ENCODE measurements at regions of chr5 and their contacts with region 1.

Region 1: GRCh38 chr5:172106511-172107356 is 81.3 kb downstream of the STK10 start:
- DNase-seq: peak in 2 of 3 donors; percentile 43 to 56
- H3K4me3 ChIP-seq: no peak overlapping the region
- H3K4me3 Mint-ChIP-seq: no peak overlapping the region
- H3K27ac ChIP-seq: peak overlapping the region in 1 of 2 donors; percentile 50
- H3K27ac Mint-ChIP-seq: peak overlapping the region; percentile 33 to 88 (median 80)
- H3K4me1 ChIP-seq: peaks cover 36 to 49% of the 10 kb centered on the region in 2 donors
- H3K4me1 Mint-ChIP-seq: peaks cover 43% of the 10 kb centered on the region
- H3K27me3 ChIP-seq: no peaks in the 10 kb centered on the region
- H3K27me3 Mint-ChIP-seq: no peaks in the 10 kb centered on the region
- CTCF ChIP-seq: peak; percentile 97

Region 2: DNA sequence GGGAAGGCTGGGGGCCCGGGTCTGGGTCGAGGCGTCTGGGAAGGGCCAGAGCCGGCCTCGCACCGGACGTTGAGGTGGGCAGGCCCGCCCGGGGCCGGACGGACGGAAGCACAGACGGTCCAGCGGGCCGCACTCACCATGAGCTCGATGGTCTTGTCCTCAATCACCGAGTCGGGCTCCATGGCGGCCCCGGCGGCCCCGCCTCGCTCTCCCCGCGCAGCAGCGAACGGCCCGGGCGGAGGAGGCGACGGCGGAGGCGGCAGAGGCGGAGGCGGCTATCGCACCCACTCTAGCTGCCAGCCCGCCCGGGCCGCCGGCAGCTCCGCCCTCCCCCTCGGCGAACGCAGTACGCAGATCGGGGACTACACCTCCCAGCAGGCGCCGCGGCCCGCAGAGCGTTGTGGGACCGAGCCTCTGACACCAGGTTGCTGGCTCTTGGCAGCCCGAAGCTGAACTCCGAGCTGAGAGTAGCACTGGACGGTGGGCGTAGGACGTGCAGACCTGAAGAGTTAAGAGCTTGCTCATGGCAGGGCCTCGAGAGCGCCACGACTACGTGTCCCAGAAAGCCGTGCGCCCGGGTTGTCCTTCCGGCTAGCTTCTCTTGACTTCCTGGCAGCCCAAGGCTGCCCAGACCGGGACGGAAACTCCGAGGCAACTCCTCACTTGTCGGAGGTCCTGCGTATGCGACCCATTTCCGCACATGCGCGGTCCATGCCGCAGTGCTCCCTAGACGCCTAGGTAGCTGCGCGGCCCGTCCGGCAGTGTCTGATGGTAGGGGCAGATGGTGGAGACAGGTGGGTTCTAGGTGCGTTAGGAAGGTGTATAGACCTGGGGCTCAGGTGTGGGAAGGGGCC is 100.2 kb before region 1 on chr5 and contains the start of gene FBXW11:
- intact Hi-C with region 1: loop called in 1 of 2 experiments (anchors 10 kb)
- DNase-seq: peak; percentile 93 to 98 (median 96)
- H3K4me3 ChIP-seq: peak within 1 kb of the TSS; percentile 61 to 100 (median 93)
- H3K4me3 Mint-ChIP-seq: peak within 1 kb of the TSS; percentile 98 to 99
- H3K27ac ChIP-seq: peak within 1 kb of the TSS; percentile 92 to 97
- H3K27ac Mint-ChIP-seq: peak within 1 kb of the TSS; percentile 96 to 100 (median 99)
- H3K4me1 ChIP-seq: peaks cover 42 to 51% of the 10 kb centered on the region in 2 donors
- H3K4me1 Mint-ChIP-seq: peaks cover 42% of the 10 kb centered on the region
- H3K27me3 ChIP-seq: no peaks in the 10 kb centered on the region
- H3K27me3 Mint-ChIP-seq: no peaks in the 10 kb centered on the region
- CTCF ChIP-seq: no peak
- polyA plus RNA-seq, gene FBXW11: 15.0 to 24.5 (median 18.2) TPM

Region 3: DNA sequence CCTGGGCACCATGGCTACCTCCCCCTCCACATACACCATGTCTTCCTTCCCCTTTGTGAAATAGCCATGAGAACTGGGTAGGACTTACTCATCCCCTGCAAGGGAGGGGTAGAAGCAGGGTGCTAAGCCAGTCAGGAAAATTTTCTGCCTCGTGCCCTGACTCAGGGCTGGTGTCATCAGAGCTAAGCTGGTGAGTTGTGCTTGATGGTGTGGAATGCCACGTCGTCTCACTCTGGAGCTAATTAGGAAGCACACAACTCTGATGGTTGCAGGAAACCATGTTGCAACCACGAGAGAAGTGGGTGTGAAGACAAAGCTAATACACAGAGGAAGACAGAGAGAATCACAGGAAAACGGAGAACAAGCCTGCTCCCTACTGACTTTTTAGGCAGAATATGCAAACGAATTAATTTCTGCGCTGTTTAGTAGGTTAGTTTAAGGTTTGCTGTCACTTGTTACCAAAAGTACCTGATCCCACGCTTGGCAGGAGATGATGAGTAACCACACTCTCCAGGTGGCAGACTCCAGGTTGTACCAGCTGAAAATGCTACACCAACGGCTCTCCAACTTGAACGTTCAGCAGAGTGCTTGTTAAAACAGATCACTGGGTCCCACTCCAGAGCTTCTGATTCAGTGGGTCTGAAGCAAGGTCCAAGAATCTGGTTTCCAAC is 26.8 kb after region 1 on chr5:
- intact Hi-C with region 1: loop called in 1 of 2 experiments (anchors 1 kb)
- DNase-seq: peak; percentile 99 to 100 (median 100)
- H3K4me3 ChIP-seq: peak overlapping the region in 1 of 3 experiments; percentile 32
- H3K4me3 Mint-ChIP-seq: peak overlapping the region; percentile 27 to 65
- H3K27ac ChIP-seq: peak overlapping the region; percentile 99
- H3K27ac Mint-ChIP-seq: peak overlapping the region; percentile 99 to 100 (median 100)
- H3K4me1 ChIP-seq: peaks cover 68 to 72% of the 10 kb centered on the region in 2 donors
- H3K4me1 Mint-ChIP-seq: peaks cover 75% of the 10 kb centered on the region
- H3K27me3 ChIP-seq: no peaks in the 10 kb centered on the region
- H3K27me3 Mint-ChIP-seq: peaks cover 0 to 2% (median 0%) of the 10 kb centered on the region in 3 donors
- CTCF ChIP-seq: no peak

Region 4: GRCh38 chr5:172144291-172144815 is 37.6 kb after region 1 on chr5:
- intact Hi-C with region 1: loop called (anchors 5 kb)
- DNase-seq: no peak
- H3K4me3 ChIP-seq: no peak overlapping the region
- H3K4me3 Mint-ChIP-seq: no peak overlapping the region
- H3K27ac ChIP-seq: peak overlapping the region; percentile 13 to 61
- H3K27ac Mint-ChIP-seq: peak overlapping the region in 6 of 7 donors; percentile 46 to 82 (median 74)
- H3K4me1 ChIP-seq: peaks cover 5 to 8% of the 10 kb centered on the region in 2 donors
- H3K4me1 Mint-ChIP-seq: peaks cover 35% of the 10 kb centered on the region
- H3K27me3 ChIP-seq: no peaks in the 10 kb centered on the region
- H3K27me3 Mint-ChIP-seq: peaks cover 0 to 4% (median 0%) of the 10 kb centered on the region in 3 donors
- CTCF ChIP-seq: no peak

Region 5: GRCh38 chr5:172188033-172188892 is 81.5 kb after region 1 on chr5 and contains the start of gene STK10:
- intact Hi-C with region 1: loop called (anchors 2 to 5 kb)
- DNase-seq: peak; percentile 82 to 91 (median 90)
- H3K4me3 ChIP-seq: peak within 1 kb of the TSS; percentile 84 to 97 (median 85)
- H3K4me3 Mint-ChIP-seq: peak within 1 kb of the TSS; percentile 99 to 100
- H3K27ac ChIP-seq: peak within 1 kb of the TSS; percentile 97
- H3K27ac Mint-ChIP-seq: peak within 1 kb of the TSS; percentile 95 to 100 (median 99)
- H3K4me1 ChIP-seq: peaks cover 34 to 38% of the 10 kb centered on the region in 2 donors
- H3K4me1 Mint-ChIP-seq: peaks cover 29% of the 10 kb centered on the region
- H3K27me3 ChIP-seq: no peaks in the 10 kb centered on the region
- H3K27me3 Mint-ChIP-seq: peaks cover 0 to 5% (median 1%) of the 10 kb centered on the region in 3 donors
- CTCF ChIP-seq: peak; percentile 92
- polyA plus RNA-seq, gene STK10: 21.5 to 180 (median 47.4) TPM

Region 6: GRCh38 chr5:172283020-172283861 is 176.5 kb after region 1 on chr5 and contains the start of gene UBTD2:
- intact Hi-C with region 1: loop called in 1 of 2 experiments (anchors 10 kb)
- DNase-seq: peak; percentile 54 to 64 (median 59)
- H3K4me3 ChIP-seq: peak within 1 kb of the TSS; percentile 56 to 95 (median 83)
- H3K4me3 Mint-ChIP-seq: peak within 1 kb of the TSS; percentile 92 to 95
- H3K27ac ChIP-seq: peak within 1 kb of the TSS in 1 of 2 donors; percentile 68
- H3K27ac Mint-ChIP-seq: peak within 1 kb of the TSS; percentile 65 to 93 (median 79)
- H3K4me1 ChIP-seq: peaks cover 15 to 33% of the 10 kb centered on the region in 2 donors
- H3K4me1 Mint-ChIP-seq: peaks cover 21% of the 10 kb centered on the region
- H3K27me3 ChIP-seq: peaks cover 2 to 12% of the 10 kb centered on the region in 2 donors
- H3K27me3 Mint-ChIP-seq: peaks cover 8 to 20% (median 14%) of the 10 kb centered on the region in 3 donors
- CTCF ChIP-seq: peak; percentile 74
- polyA plus RNA-seq, gene UBTD2: 2.3 to 3.2 (median 2.6) TPM

Region 7: GRCh38 chr5:172293054-172293744 is 186.5 kb after region 1 on chr5:
- intact Hi-C with region 1: loop called (anchors 5 to 10 kb)
- DNase-seq: peak; percentile 57 to 71 (median 70)
- H3K4me3 ChIP-seq: no peak overlapping the region
- H3K4me3 Mint-ChIP-seq: no peak overlapping the region
- H3K27ac ChIP-seq: no peak overlapping the region
- H3K27ac Mint-ChIP-seq: no peak overlapping the region
- H3K4me1 ChIP-seq: peaks cover 4% of the 10 kb centered on the region in 2 donors
- H3K4me1 Mint-ChIP-seq: peaks cover 6% of the 10 kb centered on the region
- H3K27me3 ChIP-seq: no peaks in the 10 kb centered on the region
- H3K27me3 Mint-ChIP-seq: peaks cover 1 to 8% (median 5%) of the 10 kb centered on the region in 3 donors
- CTCF ChIP-seq: peak; percentile 90